PC-9 (cell line): ENCODE measurements at regions of chr19 and their contacts with region 1.

Region 1: GRCh38 chr19:46600384-46601317 is 479 bp upstream of the CALM3 start:
- DNase-seq: peak; percentile 91 to 96
- H3K4me3 ChIP-seq: peak overlapping the region; percentile 100
- H3K27ac ChIP-seq: peak overlapping the region; percentile 93
- H3K4me1 ChIP-seq: peaks cover 12% of the 10 kb centered on the region; the same call in 1 of the 2 replicates
- H3K27me3 ChIP-seq: no peaks in the 10 kb centered on the region
- CTCF ChIP-seq: no peak

Region 2: GRCh38 chr19:46068345-46069258 is 532.0 kb before region 1 on chr19:
- CTCF ChIA-PET with region 1: interaction called, 27 read pairs
- POLR2A ChIA-PET with region 1: no interaction called
- intact Hi-C with region 1: no loop called
- DNase-seq: peak; percentile 78 to 99
- H3K4me3 ChIP-seq: peak overlapping the region; percentile 4; the same call in 1 of the 2 replicates
- H3K27ac ChIP-seq: peak overlapping the region; percentile 89
- H3K4me1 ChIP-seq: peaks cover 85% of the 10 kb centered on the region
- H3K27me3 ChIP-seq: no peaks in the 10 kb centered on the region
- CTCF ChIP-seq: no peak; the same call in 1 of the 2 replicates

Region 3: GRCh38 chr19:46614114-46614722 is 13.6 kb after region 1 on chr19:
- CTCF ChIA-PET with region 1: interaction called, 11 read pairs
- POLR2A ChIA-PET with region 1: no interaction called
- intact Hi-C with region 1: no loop called
- DNase-seq: peak; percentile 55 to 79
- H3K4me3 ChIP-seq: no peak overlapping the region
- H3K27ac ChIP-seq: no peak overlapping the region
- H3K4me1 ChIP-seq: no peaks in the 10 kb centered on the region
- H3K27me3 ChIP-seq: no peaks in the 10 kb centered on the region
- CTCF ChIP-seq: peak; percentile 97